ENCODE measurements at regions of chr12 and their contacts with region 1.

Region 1: DNA sequence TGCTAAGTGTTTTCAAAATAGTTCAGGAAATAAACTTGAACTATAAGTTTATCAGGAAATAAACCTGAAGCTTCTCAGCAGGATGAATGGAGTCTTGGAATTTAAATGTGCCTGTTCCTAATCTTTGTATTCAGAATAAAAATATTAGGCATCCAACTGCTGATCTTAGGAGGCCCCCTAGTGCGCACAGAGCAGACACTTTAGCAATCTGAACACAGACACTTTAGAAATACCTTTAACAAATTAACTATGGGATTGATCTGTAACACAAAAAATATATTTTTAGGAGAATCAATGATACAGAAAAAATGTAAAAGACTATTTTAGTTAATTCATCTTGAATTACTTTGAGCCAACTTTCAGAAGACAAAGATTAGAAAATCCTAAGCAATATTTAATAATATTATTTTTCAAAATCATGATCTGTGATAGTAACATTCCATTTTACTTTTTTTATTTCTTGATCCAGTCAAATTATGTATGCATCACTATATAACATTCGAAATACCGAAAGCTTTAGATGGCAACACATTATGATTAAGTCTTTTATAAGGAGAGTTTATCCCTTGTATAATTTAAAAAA is 80.9 kb downstream of the SLC41A2 start:
- DNase-seq: no peak
- ATAC-seq: peak; percentile 72 to 92

Region 2: GRCh38 chr12:104381731-104382480 is 495.3 kb before region 1 on chr12:
- intact Hi-C with region 1: loop called (anchors 5 kb)
- DNase-seq: peak; percentile 76
- ATAC-seq: peak; percentile 89 to 91

Region 3: GRCh38 chr12:104456417-104456949 is 420.7 kb before region 1 on chr12 and contains the start of gene CHST11:
- intact Hi-C with region 1: loop called in 1 of 2 experiments (anchors 10 kb)
- DNase-seq: peak; percentile 88
- ATAC-seq: peak; percentile 92 to 94
- total RNA-seq, gene CHST11: 12.9 to 17.7 TPM

Region 4: GRCh38 chr12:105053116-105053572 is 175.9 kb after region 1 on chr12:
- intact Hi-C with region 1: loop called in 1 of 2 experiments (anchors 5 kb)
- DNase-seq: peak; percentile 70
- ATAC-seq: peak; percentile 68 to 83

Measured in left cardiac atrium (tissue), 4 donors.